ENCODE measurements at regions of chr1 and their contacts with region 1.

Region 1: DNA sequence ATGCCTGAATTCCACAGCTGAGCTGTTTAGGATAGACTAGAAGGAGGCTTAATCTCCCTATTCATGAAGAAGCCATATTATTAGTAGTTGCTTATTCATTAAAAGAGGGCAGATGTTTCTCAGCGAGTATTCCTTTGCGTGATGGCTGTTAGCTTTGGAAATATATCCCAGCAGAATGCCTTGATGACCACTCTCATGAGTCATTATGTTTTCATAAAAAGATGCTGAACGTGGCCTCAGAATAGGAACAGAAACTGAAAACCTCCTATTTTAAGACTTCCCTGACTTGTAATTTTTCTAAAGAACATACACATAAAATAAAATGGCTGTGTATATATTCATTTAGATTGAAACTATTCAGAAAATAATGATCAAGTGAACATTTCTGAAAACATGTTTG is 9.6 kb upstream of the PLA2G4A start:
- DNase-seq: no peak
- ATAC-seq: no peak
- H3K4me3 Mint-ChIP-seq: no peak overlapping the region
- H3K27ac Mint-ChIP-seq: no peak overlapping the region
- H3K4me1 Mint-ChIP-seq: no peaks in the 10 kb centered on the region
- H3K27me3 Mint-ChIP-seq: peaks cover 4% of the 10 kb centered on the region

Region 2: GRCh38 chr1:186802388-186802787 is 16.7 kb before region 1 on chr1:
- CTCF ChIA-PET with region 1: no interaction called
- POLR2A ChIA-PET with region 1: no interaction called
- intact Hi-C with region 1: loop called in 1 of 2 experiments (anchors 1 kb)
- DNase-seq: no peak
- ATAC-seq: no peak
- H3K4me3 Mint-ChIP-seq: no peak overlapping the region
- H3K27ac Mint-ChIP-seq: no peak overlapping the region
- H3K4me1 Mint-ChIP-seq: no peaks in the 10 kb centered on the region
- H3K27me3 Mint-ChIP-seq: no peaks in the 10 kb centered on the region

Region 3: DNA sequence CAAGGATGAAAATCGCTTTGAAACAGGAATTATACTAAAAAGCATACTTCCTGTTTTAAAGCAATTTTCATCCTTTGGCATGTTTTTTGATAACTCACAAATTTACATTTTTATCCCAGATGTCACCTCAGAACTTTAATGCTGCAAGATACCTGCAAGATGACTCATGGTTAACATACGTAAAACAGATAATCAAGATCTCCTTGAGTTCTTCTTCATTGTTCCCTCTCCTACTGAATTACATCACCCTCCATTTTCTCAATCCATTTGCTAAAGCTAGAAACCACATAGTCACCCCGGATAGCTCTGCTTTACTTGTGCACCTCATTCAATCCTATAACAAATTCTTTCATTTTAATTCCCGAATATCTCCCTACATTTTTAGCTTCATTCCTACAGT is 1123.9 kb after region 1 on chr1:
- CTCF ChIA-PET with region 1: no interaction called
- POLR2A ChIA-PET with region 1: no interaction called
- intact Hi-C with region 1: no loop called
- DNase-seq: no peak
- ATAC-seq: no peak
- H3K4me3 Mint-ChIP-seq: no peak overlapping the region
- H3K27ac Mint-ChIP-seq: no peak overlapping the region
- H3K4me1 Mint-ChIP-seq: no peaks in the 10 kb centered on the region
- H3K27me3 Mint-ChIP-seq: no peaks in the 10 kb centered on the region

Measured in activated CD4-positive, alpha-beta T cell treated with anti-CD3 and anti-CD28 coated beads for 36 hours (primary cell).